Dendritic cell treated with granulocyte-macrophage colony-stimulating factor and Interleukin-4, amounts not matched to agents 40 ng/mL and 50 ng/mL, for 4 days (primary cell): ENCODE measurements at regions of chr13 and their contacts with region 1.

Region 1: DNA sequence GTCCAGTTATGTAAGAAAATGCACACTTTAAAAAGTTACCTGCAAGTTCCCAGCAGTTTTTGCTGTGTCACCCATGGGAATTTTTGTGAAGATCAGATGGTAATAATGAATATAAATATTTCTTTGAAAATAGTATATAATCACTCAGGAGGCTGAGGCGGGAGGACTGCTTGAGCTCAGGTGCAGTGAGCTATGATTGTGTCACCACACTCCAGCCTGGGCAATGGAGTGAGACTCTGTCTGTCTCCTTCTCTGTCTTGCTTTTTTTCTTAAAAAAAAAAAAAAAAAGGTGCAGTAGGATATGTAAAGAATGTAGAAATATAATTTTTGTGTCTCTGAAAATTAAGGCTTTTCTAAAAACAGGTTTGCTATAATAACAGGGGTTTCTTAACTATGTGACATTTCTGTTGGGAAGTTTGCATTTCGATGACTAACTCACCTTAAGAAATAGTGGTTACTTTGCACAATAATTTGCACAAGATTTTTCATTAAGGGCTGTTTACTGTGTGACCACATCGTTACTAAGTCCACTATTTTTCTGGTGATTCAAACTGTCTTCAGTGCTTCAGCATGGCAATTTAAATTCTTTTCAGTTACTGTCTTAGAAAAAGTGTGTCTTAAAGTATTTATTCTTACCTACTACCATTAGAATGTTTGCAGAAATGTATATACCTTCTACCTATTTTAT is 37.3 kb downstream of the DNAJC3 start:
- H3K4me3 Mint-ChIP-seq: no peak overlapping the region
- H3K27ac Mint-ChIP-seq: no peak overlapping the region
- H3K4me1 Mint-ChIP-seq: peaks cover 33% of the 10 kb centered on the region
- H3K27me3 Mint-ChIP-seq: no peaks in the 10 kb centered on the region

Region 2: GRCh38 chr13:95676762-95677563 is 37.3 kb before region 1 on chr13 and contains the start of gene DNAJC3:
- intact Hi-C with region 1: loop called (anchors 5 kb)
- H3K4me3 Mint-ChIP-seq: peak within 1 kb of the TSS; percentile 96
- H3K27ac Mint-ChIP-seq: peak within 1 kb of the TSS; percentile 95
- H3K4me1 Mint-ChIP-seq: peaks cover 76% of the 10 kb centered on the region
- H3K27me3 Mint-ChIP-seq: no peaks in the 10 kb centered on the region